Caco-2 (cell line): ENCODE measurements at regions of chr11 and their contacts with region 1.

Region 1: GRCh38 chr11:111777094-111778046 is 11.2 kb upstream of the PPP2R1B start:
- DNase-seq: peak; percentile 54 to 71
- H3K4me3 ChIP-seq: no peak overlapping the region
- H3K4me3 Mint-ChIP-seq: peak overlapping the region; percentile 4
- H3K27ac Mint-ChIP-seq: peak overlapping the region; percentile 39
- H3K4me1 ChIP-seq: peaks cover 17% of the 10 kb centered on the region
- H3K4me1 Mint-ChIP-seq: peaks cover 17% of the 10 kb centered on the region
- H3K27me3 ChIP-seq: no peaks in the 10 kb centered on the region
- H3K27me3 Mint-ChIP-seq: no peaks in the 10 kb centered on the region
- CTCF ChIP-seq: peak; percentile 95 to 96

Region 2: GRCh38 chr11:111565114-111565720 is 212.2 kb before region 1 on chr11:
- CTCF ChIA-PET with region 1: no interaction called
- POLR2A ChIA-PET with region 1: no interaction called
- intact Hi-C with region 1: loop called (anchors 1 kb)
- DNase-seq: peak; percentile 73 to 86
- H3K4me3 ChIP-seq: no peak overlapping the region
- H3K4me3 Mint-ChIP-seq: no peak overlapping the region
- H3K27ac Mint-ChIP-seq: no peak overlapping the region
- H3K4me1 ChIP-seq: no peaks in the 10 kb centered on the region
- H3K4me1 Mint-ChIP-seq: peaks cover 7% of the 10 kb centered on the region
- H3K27me3 ChIP-seq: no peaks in the 10 kb centered on the region
- H3K27me3 Mint-ChIP-seq: no peaks in the 10 kb centered on the region
- CTCF ChIP-seq: peak; percentile 93 to 98

Region 3: GRCh38 chr11:111707039-111707690 is 70.2 kb before region 1 on chr11:
- CTCF ChIA-PET with region 1: interaction called, 3 read pairs
- POLR2A ChIA-PET with region 1: interaction called, 3 read pairs
- intact Hi-C with region 1: loop called (anchors 1 kb)
- DNase-seq: peak; percentile 63 to 73
- H3K4me3 ChIP-seq: no peak overlapping the region
- H3K4me3 Mint-ChIP-seq: no peak overlapping the region
- H3K27ac Mint-ChIP-seq: no peak overlapping the region
- H3K4me1 ChIP-seq: peaks cover 5% of the 10 kb centered on the region; the same call in 1 of the 2 replicates
- H3K4me1 Mint-ChIP-seq: peaks cover 16% of the 10 kb centered on the region
- H3K27me3 ChIP-seq: no peaks in the 10 kb centered on the region
- H3K27me3 Mint-ChIP-seq: no peaks in the 10 kb centered on the region
- CTCF ChIP-seq: no peak

Region 4: GRCh38 chr11:111756097-111756496 is 21.3 kb before region 1 on chr11:
- CTCF ChIA-PET with region 1: interaction called, 19 read pairs
- POLR2A ChIA-PET with region 1: interaction called, 3 read pairs
- intact Hi-C with region 1: no loop called
- DNase-seq: no peak
- H3K4me3 ChIP-seq: no peak overlapping the region
- H3K4me3 Mint-ChIP-seq: no peak overlapping the region
- H3K27ac Mint-ChIP-seq: peak overlapping the region; percentile 90
- H3K4me1 ChIP-seq: peaks cover 21% of the 10 kb centered on the region
- H3K4me1 Mint-ChIP-seq: peaks cover 21% of the 10 kb centered on the region
- H3K27me3 ChIP-seq: no peaks in the 10 kb centered on the region
- H3K27me3 Mint-ChIP-seq: no peaks in the 10 kb centered on the region
- CTCF ChIP-seq: no peak

Region 5: GRCh38 chr11:111797145-111797581 is 19.8 kb after region 1 on chr11:
- CTCF ChIA-PET with region 1: interaction called, 7 read pairs
- POLR2A ChIA-PET with region 1: no interaction called
- intact Hi-C with region 1: loop called (anchors 1 kb)
- DNase-seq: no peak
- H3K4me3 ChIP-seq: no peak overlapping the region
- H3K4me3 Mint-ChIP-seq: no peak overlapping the region
- H3K27ac Mint-ChIP-seq: no peak overlapping the region
- H3K4me1 ChIP-seq: peaks cover 20% of the 10 kb centered on the region
- H3K4me1 Mint-ChIP-seq: peaks cover 21% of the 10 kb centered on the region
- H3K27me3 ChIP-seq: no peaks in the 10 kb centered on the region
- H3K27me3 Mint-ChIP-seq: no peaks in the 10 kb centered on the region
- CTCF ChIP-seq: no peak